AG04450 (cell line): ENCODE measurements at regions of chr11 and their contacts with region 1.

Region 1: DNA sequence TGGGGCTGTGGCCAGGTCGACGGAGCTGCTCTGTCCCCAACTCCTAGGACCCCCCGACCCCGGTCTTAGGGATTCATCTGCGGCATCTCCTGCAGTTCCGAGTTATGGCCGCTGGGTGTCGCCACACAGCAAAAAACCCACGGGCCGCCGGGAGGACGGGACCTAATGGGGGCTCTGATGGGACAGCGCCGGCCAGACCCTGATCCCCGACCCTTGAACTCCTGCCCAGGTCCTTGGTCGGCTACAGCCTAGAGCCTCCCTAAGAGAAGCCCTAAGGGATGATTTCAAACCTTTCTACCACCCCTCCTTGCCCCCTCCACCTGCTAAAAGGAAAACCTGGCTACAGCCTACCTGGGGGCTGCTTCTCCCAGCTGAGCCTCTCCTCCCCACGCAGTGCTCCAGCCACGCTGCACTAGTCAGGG is 30.8 kb upstream of the LRRC10B start:
- DNase-seq: no peak
- H3K4me3 ChIP-seq: no peak overlapping the region
- H3K27ac ChIP-seq: no peak overlapping the region
- H3K27me3 ChIP-seq: peaks cover 15% of the 10 kb centered on the region
- CTCF ChIP-seq: peak; percentile 87

Region 2: GRCh38 chr11:61488651-61489291 is 11.0 kb after region 1 on chr11:
- CTCF ChIA-PET with region 1: interaction called, 12 read pairs
- POLR2A ChIA-PET with region 1: no interaction called
- DNase-seq: no peak
- H3K4me3 ChIP-seq: no peak overlapping the region
- H3K27ac ChIP-seq: no peak overlapping the region
- H3K27me3 ChIP-seq: peaks cover 5% of the 10 kb centered on the region
- CTCF ChIP-seq: no peak

Region 3: GRCh38 chr11:61627567-61628445 is 150.1 kb after region 1 on chr11:
- CTCF ChIA-PET with region 1: interaction called, 26 read pairs
- POLR2A ChIA-PET with region 1: no interaction called
- DNase-seq: peak; percentile 50
- H3K4me3 ChIP-seq: no peak overlapping the region
- H3K27ac ChIP-seq: no peak overlapping the region
- H3K27me3 ChIP-seq: peaks cover 12% of the 10 kb centered on the region
- CTCF ChIP-seq: peak; percentile 93

Region 4: GRCh38 chr11:61679893-61680621 is 202.3 kb after region 1 on chr11 and contains the start of gene DAGLA:
- CTCF ChIA-PET with region 1: no interaction called
- POLR2A ChIA-PET with region 1: no interaction called
- DNase-seq: no peak
- H3K4me3 ChIP-seq: peak within 1 kb of the TSS; percentile 62
- H3K27ac ChIP-seq: no peak within 1 kb of the TSS
- H3K27me3 ChIP-seq: peaks cover 57% of the 10 kb centered on the region
- CTCF ChIP-seq: peak; percentile 82
- polyA plus RNA-seq, gene DAGLA: 1.1 and 1.7 TPM in 2 replicates